Adrenal gland (tissue), 19 donors: ENCODE measurements at regions of chr5 and their contacts with region 1.

Region 1: GRCh38 chr5:66595756-66596635 is at the start of gene MAST4:
- DNase-seq: peak; percentile 88 to 97 (median 93)
- H3K4me3 ChIP-seq: peak within 1 kb of the TSS; percentile 29 to 89 (median 76)
- H3K27ac ChIP-seq: peak within 1 kb of the TSS in 3 of 5 donors; percentile 55 to 72 (median 61)
- H3K4me1 ChIP-seq: peaks cover 10 to 23% of the 10 kb centered on the region in 2 donors
- H3K27me3 ChIP-seq: no peaks in the 10 kb centered on the region
- CTCF ChIP-seq: no peak
- POLR2A ChIP-seq: peak; percentile 70 to 91
- total RNA-seq, gene MAST4: 27.6 to 95.0 (median 54.7) TPM

Region 2: DNA sequence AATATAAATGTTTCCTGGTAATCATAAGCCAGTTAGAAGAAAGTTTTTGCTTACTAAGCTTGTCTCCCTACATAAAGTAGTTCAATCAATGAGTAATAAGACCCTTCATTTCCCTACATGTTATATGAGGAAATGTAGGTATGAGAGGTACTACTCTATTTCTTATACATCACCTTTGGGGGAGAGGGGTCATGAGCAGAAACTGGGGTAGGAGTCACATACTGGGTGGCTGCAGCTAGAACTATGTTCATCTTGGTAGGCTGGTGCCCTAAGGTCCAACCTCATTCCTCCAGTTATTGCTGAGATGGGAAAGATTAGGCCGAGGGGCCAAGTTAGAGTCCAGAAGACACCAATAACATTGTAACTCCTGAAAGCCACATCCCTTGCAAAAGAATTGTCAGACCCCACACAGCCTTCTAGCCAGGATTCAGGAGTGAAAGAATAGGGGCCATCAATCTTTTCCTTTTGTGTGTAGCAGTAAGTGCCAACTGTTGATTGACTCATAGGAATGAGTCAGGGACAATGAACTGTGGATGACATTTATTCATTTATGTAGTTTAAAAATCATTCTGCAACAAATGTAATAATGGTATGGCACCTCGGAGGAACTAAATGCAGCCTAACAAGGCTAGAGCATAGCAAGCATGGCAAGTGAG is 473.5 kb before region 1 on chr5:
- intact Hi-C with region 1: no loop called
- DNase-seq: no peak
- H3K4me3 ChIP-seq: no peak overlapping the region
- H3K27ac ChIP-seq: no peak overlapping the region
- H3K4me1 ChIP-seq: no peaks in the 10 kb centered on the region
- H3K27me3 ChIP-seq: no peaks in the 10 kb centered on the region
- CTCF ChIP-seq: no peak
- POLR2A ChIP-seq: no peak

Region 3: DNA sequence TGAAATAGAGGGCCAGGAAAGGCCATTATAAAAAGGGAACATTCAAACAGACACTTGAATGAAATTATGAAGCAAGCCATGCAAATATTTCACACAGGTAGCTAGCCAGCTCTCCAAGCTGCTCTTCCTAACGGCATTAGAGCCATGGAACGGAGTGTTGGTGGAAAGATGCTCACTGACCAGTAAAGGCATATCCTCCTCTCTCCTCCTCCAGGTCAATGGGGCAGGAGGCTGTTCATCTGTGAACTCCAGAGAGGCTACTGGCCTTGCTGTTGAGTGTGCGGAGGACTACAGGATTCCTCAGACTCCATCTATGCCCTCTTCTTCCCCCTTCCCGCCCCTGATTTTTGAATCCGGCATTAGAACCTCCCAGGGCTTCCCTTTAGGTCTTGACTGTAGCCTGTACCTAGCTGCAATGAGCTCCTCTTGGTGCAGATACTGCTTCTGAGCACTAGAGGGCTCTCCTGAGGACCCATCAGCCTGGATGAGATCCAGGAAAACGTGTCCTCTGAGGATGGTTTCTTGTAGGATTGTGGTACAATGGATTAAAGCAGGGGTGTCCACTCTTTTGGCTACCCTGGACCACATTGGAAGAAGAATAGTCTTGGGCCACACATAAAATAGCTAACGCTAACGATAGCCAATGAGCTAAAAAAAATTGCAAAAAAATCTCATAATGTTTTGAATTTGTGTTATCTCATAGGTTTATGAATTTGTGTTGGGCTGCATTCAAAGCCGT is 289.7 kb before region 1 on chr5:
- intact Hi-C with region 1: loop called in 1 of 2 experiments (anchors 10 kb)
- DNase-seq: peak; percentile 53 to 84 (median 67)
- H3K4me3 ChIP-seq: no peak overlapping the region
- H3K27ac ChIP-seq: no peak overlapping the region
- H3K4me1 ChIP-seq: no peaks in the 10 kb centered on the region
- H3K27me3 ChIP-seq: no peaks in the 10 kb centered on the region
- CTCF ChIP-seq: peak; percentile 69 to 82 (median 76)
- POLR2A ChIP-seq: no peak

Region 4: GRCh38 chr5:66757188-66757833 is 161.3 kb after region 1 on chr5:
- intact Hi-C with region 1: loop called in 1 of 2 experiments (anchors 10 kb)
- DNase-seq: peak; percentile 49 to 85 (median 59)
- H3K4me3 ChIP-seq: no peak overlapping the region
- H3K27ac ChIP-seq: no peak overlapping the region
- H3K4me1 ChIP-seq: no peaks in the 10 kb centered on the region
- H3K27me3 ChIP-seq: no peaks in the 10 kb centered on the region
- CTCF ChIP-seq: peak; percentile 35 to 74 (median 65)
- POLR2A ChIP-seq: no peak